GM12878 (cell line): ENCODE measurements at regions of chr1 and their contacts with region 1.

Region 1: GRCh38 chr1:1890506-1891348 is at the start of gene GNB1:
- DNase-seq: peak; percentile 48
- ATAC-seq: peak; percentile 61
- H3K4me3 ChIP-seq: peak within 1 kb of the TSS; percentile 97
- H3K27ac ChIP-seq: peak within 1 kb of the TSS; percentile 84
- H3K4me1 ChIP-seq: peaks cover 21% of the 10 kb centered on the region
- H3K27me3 ChIP-seq: no peaks in the 10 kb centered on the region
- CTCF ChIP-seq: no peak
- EP300 ChIP-seq: 0 out of 4 replicates have a peak, but pooled peaks of 1 of the 2 experiments have one; percentile 12
- POLR2A ChIP-seq: 0 out of 2 replicates have a peak, but pooled peaks have one; percentile 38
- RAD21 ChIP-seq: no peak
- polyA plus RNA-seq, gene GNB1: 41.0 to 53.7 TPM

Region 2: GRCh38 chr1:1777950-1778662 is 112.6 kb before region 1 on chr1 and contains the start of gene NADK:
- CTCF ChIA-PET with region 1: interaction called, 3 read pairs
- POLR2A ChIA-PET with region 1: interaction called, 7 read pairs
- RAD21 ChIA-PET with region 1: interaction called, 12 read pairs
- SMC1A ChIA-PET with region 1: interaction called, 7 read pairs
- in situ Hi-C with region 1: no loop called
- intact Hi-C with region 1: loop called (anchors 5 kb)
- DNase-seq: no peak
- ATAC-seq: peak; percentile 17
- H3K4me3 ChIP-seq: peak within 1 kb of the TSS; percentile 68
- H3K27ac ChIP-seq: peak within 1 kb of the TSS; percentile 98
- H3K4me1 ChIP-seq: peaks cover 52% of the 10 kb centered on the region
- H3K27me3 ChIP-seq: no peaks in the 10 kb centered on the region
- CTCF ChIP-seq: no peak
- EP300 ChIP-seq: no peak
- POLR2A ChIP-seq: peak; percentile 60
- RAD21 ChIP-seq: no peak
- polyA plus RNA-seq, gene NADK: 1.1 to 3.6 TPM

Region 3: DNA sequence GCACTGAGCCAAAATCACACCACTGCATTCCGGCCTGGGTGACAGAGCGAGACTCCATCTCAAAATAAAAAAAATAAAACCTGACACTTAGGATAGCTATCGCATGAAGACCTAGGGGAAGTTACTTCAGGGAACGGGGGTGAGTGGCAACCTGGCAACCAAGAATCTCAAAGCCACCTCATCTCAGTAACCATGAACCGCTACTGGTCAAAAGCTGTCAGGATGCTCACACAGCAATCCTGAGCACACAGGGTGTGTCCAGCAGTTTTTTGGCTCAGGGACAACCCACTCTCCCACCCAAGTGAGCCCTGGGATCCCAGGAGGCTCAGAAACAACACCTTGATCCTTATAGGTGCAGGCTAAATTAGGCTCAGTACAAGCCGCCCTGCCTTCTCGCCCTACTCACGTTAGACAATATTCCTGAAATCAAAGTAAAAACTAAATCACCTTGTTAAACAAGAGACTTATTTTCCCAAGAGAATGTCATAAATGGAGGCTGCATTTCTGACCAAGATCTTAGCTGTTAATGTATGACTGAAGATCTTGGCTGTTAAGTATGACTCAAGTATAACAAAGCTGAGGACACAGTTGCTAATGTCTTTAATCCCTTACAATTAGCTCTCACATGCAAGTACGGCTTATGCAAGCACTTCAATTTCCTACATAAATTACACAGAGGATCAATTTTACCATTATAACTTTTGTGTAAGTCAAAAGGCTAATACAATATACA is 64.2 kb before region 1 on chr1:
- CTCF ChIA-PET with region 1: interaction called, 3 read pairs
- POLR2A ChIA-PET with region 1: interaction called, 3 read pairs
- RAD21 ChIA-PET with region 1: no interaction called
- SMC1A ChIA-PET with region 1: interaction called, 14 read pairs
- in situ Hi-C with region 1: no loop called
- intact Hi-C with region 1: no loop called
- DNase-seq: no peak
- ATAC-seq: no peak
- H3K4me3 ChIP-seq: no peak overlapping the region
- H3K27ac ChIP-seq: no peak overlapping the region
- H3K4me1 ChIP-seq: peaks cover 31% of the 10 kb centered on the region
- H3K27me3 ChIP-seq: no peaks in the 10 kb centered on the region
- CTCF ChIP-seq: no peak
- EP300 ChIP-seq: no peak
- POLR2A ChIP-seq: no peak
- RAD21 ChIP-seq: no peak

Region 4: DNA sequence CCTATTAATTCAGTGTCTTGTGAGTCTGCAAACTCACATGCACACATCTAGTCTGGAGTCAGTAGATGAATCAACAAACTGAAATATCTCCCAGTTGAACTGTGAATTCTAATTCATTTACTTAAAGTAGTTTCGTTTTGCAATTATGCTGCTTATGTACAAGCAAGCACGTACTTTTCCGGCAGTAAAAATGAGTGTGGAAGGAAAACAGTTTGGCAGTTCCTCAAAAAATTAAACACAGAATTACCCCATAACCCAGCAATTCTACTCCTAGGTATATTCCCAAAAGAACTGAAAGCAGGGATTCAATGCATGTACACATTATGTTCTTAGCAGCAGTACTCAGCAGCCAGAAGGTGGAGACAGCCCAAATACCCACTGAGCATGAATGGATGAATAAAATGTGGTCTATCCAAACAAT is 49.1 kb before region 1 on chr1:
- CTCF ChIA-PET with region 1: interaction called, 3 read pairs
- POLR2A ChIA-PET with region 1: interaction called, 3 read pairs
- RAD21 ChIA-PET with region 1: interaction called, 4 read pairs
- SMC1A ChIA-PET with region 1: no interaction called
- in situ Hi-C with region 1: no loop called
- intact Hi-C with region 1: loop called (anchors 5 kb)
- DNase-seq: no peak
- ATAC-seq: peak; percentile 57
- H3K4me3 ChIP-seq: peak overlapping the region; percentile 14; the same call in 1 of the 2 replicates
- H3K27ac ChIP-seq: peak overlapping the region; percentile 47
- H3K4me1 ChIP-seq: peaks cover 33% of the 10 kb centered on the region
- H3K27me3 ChIP-seq: no peaks in the 10 kb centered on the region
- CTCF ChIP-seq: peak in 1 of 3 experiments; percentile 12; a peak in 1 of 6 replicates
- EP300 ChIP-seq: no peak
- POLR2A ChIP-seq: no peak
- RAD21 ChIP-seq: no peak